WTC11 (cell line): ENCODE measurements at regions of chr6 and their contacts with region 1.

Region 1: DNA sequence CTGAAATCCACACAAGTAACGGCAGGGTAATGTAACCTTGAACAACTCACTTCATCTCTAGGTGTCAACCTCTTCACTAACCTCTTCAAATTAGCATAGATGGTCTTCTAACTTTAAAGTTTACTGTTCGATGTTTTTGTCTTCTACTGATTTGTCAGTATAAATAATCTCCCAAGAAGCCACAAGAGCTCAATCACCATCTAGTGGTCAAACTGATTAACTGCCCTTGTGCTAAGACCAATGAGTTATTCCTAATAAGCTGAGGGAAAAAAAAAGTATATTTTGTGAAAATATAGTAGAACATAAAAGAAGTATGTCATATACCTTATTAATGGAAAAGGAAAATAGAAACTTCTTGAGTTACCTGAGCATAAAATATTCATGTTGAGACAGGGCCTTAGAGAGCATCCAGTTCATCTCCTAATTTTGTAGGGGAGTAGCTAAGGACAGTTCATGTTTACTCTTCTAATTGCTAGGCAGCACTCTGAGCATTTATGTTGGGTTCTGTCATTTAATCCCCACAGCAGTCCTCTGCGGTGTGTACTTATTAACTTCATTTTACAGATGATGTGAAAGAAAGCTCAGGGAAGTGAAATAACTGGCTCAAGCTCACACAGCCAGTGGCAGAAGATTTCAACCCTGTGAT is 317.1 kb downstream of the ESR1 start:
- DNase-seq: no peak
- ATAC-seq: peak; percentile 74
- H3K4me3 Mint-ChIP-seq: no peak overlapping the region
- H3K27ac Mint-ChIP-seq: no peak overlapping the region
- H3K4me1 Mint-ChIP-seq: no peaks in the 10 kb centered on the region; the same call in 1 of the 2 replicates
- H3K27me3 Mint-ChIP-seq: no peaks in the 10 kb centered on the region
- CTCF ChIP-seq: peak; percentile 33

Region 2: GRCh38 chr6:151765444-151765886 is 359.1 kb before region 1 on chr6:
- CTCF ChIA-PET with region 1: interaction called, 24 read pairs
- POLR2A ChIA-PET with region 1: no interaction called
- DNase-seq: peak; percentile 20
- ATAC-seq: no peak
- H3K4me3 Mint-ChIP-seq: no peak overlapping the region
- H3K27ac Mint-ChIP-seq: 0 out of 2 replicates have a peak overlapping the region, but pooled peaks have one; percentile 17
- H3K4me1 Mint-ChIP-seq: peaks cover 28% of the 10 kb centered on the region
- H3K27me3 Mint-ChIP-seq: no peaks in the 10 kb centered on the region
- CTCF ChIP-seq: peak; percentile 32; the same call in 1 of the 2 replicates

Region 3: DNA sequence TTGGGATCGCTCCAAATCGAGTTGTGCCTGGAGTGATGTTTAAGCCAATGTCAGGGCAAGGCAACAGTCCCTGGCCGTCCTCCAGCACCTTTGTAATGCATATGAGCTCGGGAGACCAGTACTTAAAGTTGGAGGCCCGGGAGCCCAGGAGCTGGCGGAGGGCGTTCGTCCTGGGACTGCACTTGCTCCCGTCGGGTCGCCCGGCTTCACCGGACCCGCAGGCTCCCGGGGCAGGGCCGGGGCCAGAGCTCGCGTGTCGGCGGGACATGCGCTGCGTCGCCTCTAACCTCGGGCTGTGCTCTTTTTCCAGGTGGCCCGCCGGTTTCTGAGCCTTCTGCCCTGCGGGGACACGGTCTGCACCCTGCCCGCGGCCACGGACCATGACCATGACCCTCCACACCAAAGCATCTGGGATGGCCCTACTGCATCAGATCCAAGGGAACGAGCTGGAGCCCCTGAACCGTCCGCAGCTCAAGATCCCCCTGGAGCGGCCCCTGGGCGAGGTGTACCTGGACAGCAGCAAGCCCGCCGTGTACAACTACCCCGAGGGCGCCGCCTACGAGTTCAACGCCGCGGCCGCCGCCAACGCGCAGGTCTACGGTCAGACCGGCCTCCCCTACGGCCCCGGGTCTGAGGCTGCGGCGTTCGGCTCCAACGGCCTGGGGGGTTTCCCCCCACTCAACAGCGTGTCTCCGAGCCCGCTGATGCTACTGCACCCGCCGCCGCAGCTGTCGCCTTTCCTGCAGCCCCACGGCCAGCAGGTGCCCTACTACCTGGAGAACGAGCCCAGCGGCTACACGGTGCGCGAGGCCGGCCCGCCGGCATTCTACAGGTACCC is 316.8 kb before region 1 on chr6 and contains the start of gene ESR1:
- CTCF ChIA-PET with region 1: interaction called, 14 read pairs
- POLR2A ChIA-PET with region 1: no interaction called
- DNase-seq: peak; percentile 71
- ATAC-seq: peak; percentile 82
- H3K4me3 Mint-ChIP-seq: peak within 1 kb of the TSS; percentile 86
- H3K27ac Mint-ChIP-seq: peak within 1 kb of the TSS; percentile 30; the same call in 1 of the 2 replicates
- H3K4me1 Mint-ChIP-seq: peaks cover 25% of the 10 kb centered on the region
- H3K27me3 Mint-ChIP-seq: peaks cover 62% of the 10 kb centered on the region
- CTCF ChIP-seq: no peak
- total RNA-seq, gene ESR1: 0.32 to 1.3 TPM (median 0.98 TPM) in 3 replicates

Region 4: DNA sequence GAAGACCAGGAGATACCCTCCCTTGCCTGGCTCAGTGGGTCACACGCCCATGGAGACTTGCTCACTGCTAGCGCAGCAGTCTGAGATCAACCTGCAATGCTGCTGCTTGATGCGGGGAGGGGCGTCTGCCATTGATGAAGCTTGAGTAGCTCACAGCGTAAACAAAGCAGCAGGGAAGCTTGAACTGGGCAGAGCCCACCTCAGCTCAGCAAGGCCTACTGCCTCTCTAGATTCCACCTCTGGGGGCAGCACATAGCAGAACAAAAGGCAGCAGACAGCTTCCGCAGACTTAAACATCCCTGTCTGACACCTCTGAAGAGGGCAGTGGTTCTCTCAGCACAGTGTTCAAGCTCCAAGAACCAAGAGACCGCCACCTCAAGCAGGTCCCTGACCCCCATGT is 45.7 kb before region 1 on chr6:
- CTCF ChIA-PET with region 1: interaction called, 18 read pairs
- POLR2A ChIA-PET with region 1: no interaction called
- DNase-seq: peak; percentile 76
- ATAC-seq: peak; percentile 99
- H3K4me3 Mint-ChIP-seq: no peak overlapping the region
- H3K27ac Mint-ChIP-seq: no peak overlapping the region
- H3K4me1 Mint-ChIP-seq: peaks cover 8% of the 10 kb centered on the region
- H3K27me3 Mint-ChIP-seq: no peaks in the 10 kb centered on the region
- CTCF ChIP-seq: no peak

Region 5: DNA sequence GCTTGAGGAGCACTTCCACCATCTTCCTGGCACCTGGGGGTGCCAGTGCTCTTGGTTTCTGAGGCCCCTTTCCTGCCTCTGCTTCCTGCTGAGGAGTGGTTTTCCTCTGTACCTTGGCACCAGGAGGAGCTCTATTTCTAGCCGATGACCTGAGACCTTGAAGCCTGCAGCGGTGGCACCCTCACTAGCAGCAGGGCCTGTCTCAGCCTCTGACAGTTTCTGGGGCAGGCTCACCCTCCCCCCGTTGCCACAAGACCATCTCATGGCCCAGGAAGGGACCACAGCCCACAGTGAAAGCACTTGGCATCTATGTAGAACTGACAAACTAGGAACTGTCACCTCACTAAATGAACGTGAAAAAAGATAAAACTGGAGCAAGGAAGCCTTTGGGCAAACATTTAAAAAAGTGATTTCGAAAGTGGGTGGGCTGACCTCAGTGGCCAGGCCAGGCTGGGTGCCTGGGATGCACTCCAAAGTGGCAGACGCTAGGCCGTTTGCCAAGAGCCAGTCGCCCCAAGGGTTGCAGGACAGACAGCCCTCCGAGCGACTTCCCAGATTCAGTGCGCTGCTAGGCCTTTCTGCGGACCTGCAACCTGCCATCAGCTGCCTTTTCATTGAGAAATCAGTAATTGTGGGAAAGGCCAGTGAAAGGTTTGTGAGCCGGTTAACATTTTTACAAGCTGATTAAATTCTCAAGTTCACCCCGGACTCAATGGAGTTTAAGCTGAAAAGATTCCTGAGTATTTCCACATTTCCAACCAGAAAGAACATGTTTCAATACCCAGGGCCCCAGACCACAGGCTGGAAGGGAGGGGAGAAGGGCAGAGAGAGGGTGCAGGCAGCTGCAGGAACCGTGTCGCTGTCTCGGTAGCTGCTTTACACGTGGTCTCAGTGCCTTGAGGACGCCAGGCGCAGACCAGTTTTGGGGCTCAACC is 13.4 kb before region 1 on chr6:
- CTCF ChIA-PET with region 1: interaction called, 19 read pairs
- POLR2A ChIA-PET with region 1: interaction called, 4 read pairs
- DNase-seq: no peak
- ATAC-seq: no peak
- H3K4me3 Mint-ChIP-seq: no peak overlapping the region
- H3K27ac Mint-ChIP-seq: no peak overlapping the region; the same call in 1 of the 2 replicates
- H3K4me1 Mint-ChIP-seq: peaks cover 12% of the 10 kb centered on the region
- H3K27me3 Mint-ChIP-seq: no peaks in the 10 kb centered on the region
- CTCF ChIP-seq: no peak